ENCODE measurements at regions of chr20 and their contacts with region 1.

Region 1: DNA sequence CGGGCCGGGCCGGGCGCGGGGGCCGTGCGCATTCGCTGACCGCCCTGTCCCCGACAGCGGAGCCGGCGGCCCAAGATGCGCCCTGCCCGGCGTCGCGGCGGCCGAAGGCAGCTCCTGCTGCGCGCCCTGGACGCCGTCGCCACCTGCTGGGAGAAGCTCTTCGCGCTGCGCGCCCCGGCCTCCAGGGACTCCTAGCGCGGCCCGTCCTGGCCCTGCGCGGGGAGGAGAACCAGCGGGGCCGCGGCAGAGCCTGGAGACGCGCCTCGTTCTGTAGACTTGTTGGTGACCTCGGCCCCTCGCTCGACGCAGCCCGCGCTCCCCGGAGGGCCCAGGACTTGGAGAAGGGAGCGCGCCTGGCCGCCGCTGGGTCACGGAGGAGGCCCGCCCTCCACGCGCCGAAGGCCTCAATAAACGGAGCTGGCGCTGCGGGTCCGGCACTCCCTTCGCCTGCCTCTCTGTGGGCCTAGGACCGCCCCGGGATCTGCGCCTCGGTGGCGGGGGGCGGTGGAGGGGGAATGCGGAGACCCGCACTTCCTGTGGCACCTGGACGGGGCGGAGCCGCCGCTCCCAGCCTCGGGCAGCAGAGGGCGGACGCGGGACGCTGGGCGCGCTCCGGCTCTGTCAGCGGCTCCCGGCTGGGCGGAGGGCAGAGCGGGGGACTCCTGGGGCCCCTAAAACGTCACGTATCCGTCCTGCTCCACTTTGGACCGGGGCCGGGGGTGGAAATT is 2.7 kb downstream of the C20orf204 start:
- DNase-seq: peak; percentile 84
- ATAC-seq: peak; percentile 76
- H3K4me3 Mint-ChIP-seq: peak overlapping the region; percentile 76
- H3K27ac Mint-ChIP-seq: peak overlapping the region; percentile 78
- H3K4me1 Mint-ChIP-seq: peaks cover 76% of the 10 kb centered on the region
- H3K27me3 Mint-ChIP-seq: no peaks in the 10 kb centered on the region

Region 2: DNA sequence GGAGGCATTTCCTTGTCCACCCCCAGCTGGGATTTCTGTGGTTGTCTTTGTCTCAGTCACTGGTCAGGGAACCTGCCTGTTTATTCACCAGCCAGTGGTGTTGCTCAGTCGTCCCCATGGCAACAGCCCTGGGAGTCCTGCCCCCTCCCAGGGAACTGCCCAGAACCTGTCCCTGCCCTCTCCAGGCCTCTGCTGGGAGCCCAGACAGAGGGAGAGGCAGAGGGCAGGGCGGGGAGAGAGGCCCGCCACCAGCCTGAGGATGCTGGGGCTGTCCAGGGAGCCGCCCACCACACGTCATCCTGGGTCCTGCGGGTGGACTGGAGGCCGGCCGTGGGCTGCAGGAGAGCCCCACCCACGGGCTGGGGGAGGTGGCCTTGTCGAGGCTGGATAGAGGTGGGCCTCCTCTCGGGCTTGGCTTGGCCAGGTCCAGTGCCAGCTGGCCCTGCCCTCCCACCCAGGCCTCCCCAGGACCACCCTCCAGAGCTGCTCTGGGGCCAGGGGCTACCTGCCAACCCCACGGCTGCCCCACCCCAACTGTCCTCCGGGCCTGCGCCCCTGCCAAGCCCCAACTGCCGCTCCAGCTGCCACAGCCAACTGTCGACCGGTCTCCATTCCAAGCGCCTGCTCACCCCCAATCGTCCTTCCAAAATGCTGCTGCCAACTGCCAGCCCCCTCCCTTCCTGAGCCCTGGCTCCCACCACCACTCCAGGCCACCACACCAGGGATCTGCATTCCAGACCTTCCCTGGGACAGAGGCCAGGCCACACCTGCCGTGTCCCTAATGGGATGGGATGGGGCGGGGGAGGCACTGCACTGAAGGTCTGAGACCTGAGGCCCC is 203.5 kb before region 1 on chr20:
- CTCF ChIA-PET with region 1: no interaction called
- POLR2A ChIA-PET with region 1: no interaction called
- DNase-seq: no peak
- ATAC-seq: no peak
- H3K4me3 Mint-ChIP-seq: no peak overlapping the region
- H3K27ac Mint-ChIP-seq: no peak overlapping the region
- H3K4me1 Mint-ChIP-seq: peaks cover 5% of the 10 kb centered on the region
- H3K27me3 Mint-ChIP-seq: peaks cover 13% of the 10 kb centered on the region

Region 3: GRCh38 chr20:63896264-63897105 is 142.2 kb before region 1 on chr20:
- CTCF ChIA-PET with region 1: interaction called, 10 read pairs
- POLR2A ChIA-PET with region 1: interaction called, 3 read pairs
- DNase-seq: peak; percentile 46
- ATAC-seq: peak; percentile 28
- H3K4me3 Mint-ChIP-seq: peak overlapping the region; percentile 88
- H3K27ac Mint-ChIP-seq: peak overlapping the region; percentile 96
- H3K4me1 Mint-ChIP-seq: peaks cover 45% of the 10 kb centered on the region
- H3K27me3 Mint-ChIP-seq: no peaks in the 10 kb centered on the region

Region 4: DNA sequence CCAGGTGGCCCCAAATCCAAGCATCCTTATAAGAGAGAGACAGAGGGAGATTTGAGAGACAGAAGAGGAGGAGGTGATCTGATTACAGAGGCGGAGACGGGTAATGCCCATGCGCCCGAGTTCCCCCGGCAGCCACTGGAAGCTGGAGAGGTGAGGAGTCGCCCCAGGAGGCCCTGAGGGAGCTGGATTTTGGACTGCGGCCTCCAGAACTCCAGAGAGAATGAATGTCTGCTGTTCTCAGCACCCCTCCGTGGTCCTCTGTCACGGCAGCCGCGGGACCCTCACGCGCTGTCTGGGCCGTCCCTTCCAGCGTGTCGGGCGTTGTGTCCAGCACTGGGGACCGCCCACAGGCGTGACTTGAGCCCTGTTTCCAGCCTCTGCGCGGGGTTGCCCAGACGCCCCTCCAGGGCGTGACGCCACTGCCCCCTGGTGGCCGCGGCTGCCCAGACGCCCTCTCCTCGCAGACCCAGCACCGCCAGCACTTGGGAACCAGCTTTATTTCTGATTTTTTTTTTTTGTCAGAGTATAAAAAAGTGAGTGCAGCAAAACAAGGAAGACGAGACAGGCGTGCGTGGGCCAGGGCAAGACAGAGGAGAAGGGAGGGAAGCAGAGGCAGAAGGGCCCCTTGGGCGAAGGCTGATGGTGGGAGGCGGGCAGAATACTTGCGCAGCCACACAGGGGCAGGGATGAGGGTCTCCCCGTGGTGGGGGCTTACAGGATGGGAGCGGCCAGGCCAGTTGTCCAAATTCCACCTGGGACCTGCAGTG is 64.9 kb before region 1 on chr20:
- CTCF ChIA-PET with region 1: interaction called, 197 read pairs
- POLR2A ChIA-PET with region 1: interaction called, 13 read pairs
- DNase-seq: peak; percentile 79
- ATAC-seq: peak; percentile 54
- H3K4me3 Mint-ChIP-seq: no peak overlapping the region
- H3K27ac Mint-ChIP-seq: no peak overlapping the region
- H3K4me1 Mint-ChIP-seq: peaks cover 52% of the 10 kb centered on the region
- H3K27me3 Mint-ChIP-seq: no peaks in the 10 kb centered on the region

Region 5: DNA sequence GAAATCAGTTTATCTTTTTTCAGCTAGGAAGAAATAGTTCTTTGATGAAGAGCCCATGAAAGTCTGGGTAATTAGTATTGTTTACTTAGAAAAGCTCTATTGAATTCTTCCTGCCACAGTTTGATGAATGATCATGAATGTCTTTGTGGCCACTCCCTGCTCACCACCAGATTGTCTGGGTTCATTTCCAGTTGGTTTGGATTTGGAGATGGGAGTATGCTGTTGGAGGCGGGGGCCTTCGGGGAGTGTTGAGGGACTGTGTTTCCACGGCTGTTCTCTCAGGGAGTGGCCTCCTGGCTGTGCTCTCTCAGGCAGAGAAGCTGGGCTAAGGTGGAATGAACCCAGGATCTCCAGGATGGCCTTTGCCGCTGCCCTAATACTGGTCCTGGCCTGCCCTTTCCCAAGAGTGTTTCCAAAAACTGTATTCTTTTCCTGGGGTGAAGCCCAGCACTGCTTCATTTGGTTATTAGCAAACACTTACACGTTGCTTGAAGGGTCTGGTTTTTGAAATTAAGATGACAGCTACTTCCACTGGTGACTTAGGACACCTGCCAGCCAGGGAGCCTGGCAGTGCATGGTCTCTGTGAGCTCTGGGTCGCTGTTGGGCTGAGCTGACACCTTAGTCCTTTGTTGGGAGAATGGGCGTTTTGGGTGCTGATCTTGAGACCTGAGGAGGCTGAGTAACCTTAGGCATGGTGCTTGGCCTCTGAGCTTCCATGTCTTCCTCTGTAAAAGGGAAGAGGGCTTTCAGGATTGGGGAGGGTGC is 34.6 kb before region 1 on chr20:
- CTCF ChIA-PET with region 1: interaction called, 14 read pairs
- POLR2A ChIA-PET with region 1: interaction called, 3 read pairs
- DNase-seq: no peak
- ATAC-seq: no peak
- H3K4me3 Mint-ChIP-seq: no peak overlapping the region
- H3K27ac Mint-ChIP-seq: no peak overlapping the region
- H3K4me1 Mint-ChIP-seq: peaks cover 11% of the 10 kb centered on the region
- H3K27me3 Mint-ChIP-seq: no peaks in the 10 kb centered on the region

Region 6: DNA sequence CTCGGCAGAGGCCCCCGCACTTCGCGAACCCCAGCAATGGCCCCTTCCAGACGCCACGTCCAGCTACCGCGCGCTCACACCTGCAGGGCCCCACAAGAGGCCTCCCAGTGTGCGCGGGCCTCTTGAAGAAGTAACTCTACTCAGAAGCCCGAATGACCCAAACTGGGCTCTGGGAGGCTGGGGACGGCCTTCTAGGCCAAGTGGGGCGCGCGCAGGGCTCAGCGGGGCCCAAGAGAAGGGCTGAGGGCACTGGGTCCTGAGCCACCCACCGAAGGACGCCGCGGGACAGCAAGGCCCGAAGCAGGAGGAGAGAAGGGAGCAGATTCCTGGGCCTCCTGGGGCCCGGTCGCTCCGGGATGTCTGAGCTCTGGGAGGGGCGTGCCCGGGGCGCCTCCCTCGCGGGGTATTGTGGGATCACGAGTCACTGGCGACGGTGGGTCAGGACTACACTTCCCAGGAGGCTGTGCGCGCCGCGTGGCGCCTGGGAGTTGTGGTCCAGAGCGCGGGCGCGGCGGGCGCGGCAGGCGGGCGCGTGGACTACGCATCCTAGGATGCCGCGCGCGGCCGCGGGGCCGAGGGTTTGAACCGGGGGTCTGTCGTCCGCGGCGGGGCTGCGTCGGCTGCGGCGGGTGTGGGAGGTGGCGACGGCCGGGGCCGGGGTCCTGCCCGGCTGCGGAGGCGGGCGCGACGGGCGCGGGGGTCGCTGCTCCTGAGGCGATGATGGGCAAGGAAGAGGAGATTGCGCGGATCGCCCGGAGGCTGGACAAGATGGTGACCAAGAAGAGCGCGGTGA is 24.1 kb after region 1 on chr20 and contains the start of gene TCEA2:
- CTCF ChIA-PET with region 1: interaction called, 24 read pairs
- POLR2A ChIA-PET with region 1: interaction called, 6 read pairs
- DNase-seq: peak; percentile 97
- ATAC-seq: peak; percentile 82
- H3K4me3 Mint-ChIP-seq: peak within 1 kb of the TSS; percentile 85
- H3K27ac Mint-ChIP-seq: peak within 1 kb of the TSS; percentile 86
- H3K4me1 Mint-ChIP-seq: peaks cover 56% of the 10 kb centered on the region
- H3K27me3 Mint-ChIP-seq: no peaks in the 10 kb centered on the region
- total RNA-seq, gene TCEA2: 49.6 to 55.3 TPM

Region 7: GRCh38 chr20:64079273-64080012 is 40.7 kb after region 1 on chr20 and contains the start of gene RGS19:
- CTCF ChIA-PET with region 1: interaction called, 18 read pairs
- POLR2A ChIA-PET with region 1: interaction called, 5 read pairs
- DNase-seq: peak; percentile 86
- ATAC-seq: peak; percentile 41
- H3K4me3 Mint-ChIP-seq: peak within 1 kb of the TSS; percentile 96
- H3K27ac Mint-ChIP-seq: peak within 1 kb of the TSS; percentile 93
- H3K4me1 Mint-ChIP-seq: peaks cover 54% of the 10 kb centered on the region
- H3K27me3 Mint-ChIP-seq: peaks cover 3% of the 10 kb centered on the region
- total RNA-seq, gene RGS19: 130 to 135 TPM

Region 8: GRCh38 chr20:64145458-64145857 is 106.7 kb after region 1 on chr20:
- CTCF ChIA-PET with region 1: no interaction called
- POLR2A ChIA-PET with region 1: no interaction called
- DNase-seq: peak; percentile 28
- ATAC-seq: no peak
- H3K4me3 Mint-ChIP-seq: no peak overlapping the region
- H3K27ac Mint-ChIP-seq: no peak overlapping the region
- H3K4me1 Mint-ChIP-seq: no peaks in the 10 kb centered on the region
- H3K27me3 Mint-ChIP-seq: no peaks in the 10 kb centered on the region

Measured in activated CD8-positive, alpha-beta T cell treated with anti-CD3 and anti-CD28 coated beads, Interleukin-2, amount 10 ng/mL, durations not matched to agents 7 days and 5 days (primary cell).